Heart left ventricle (tissue), 16 donors: ENCODE measurements at regions of chr3 and their contacts with region 1.

Region 1: GRCh38 chr3:73080216-73080966 is 18.9 kb downstream of the EBLN2 start:
- DNase-seq: no peak
- ATAC-seq: no peak
- H3K4me3 ChIP-seq: no peak overlapping the region
- H3K27ac ChIP-seq: no peak overlapping the region
- H3K4me1 ChIP-seq: no peaks in the 10 kb centered on the region
- H3K27me3 ChIP-seq: no peaks in the 10 kb centered on the region
- CTCF ChIP-seq: no peak
- POLR2A ChIP-seq: no peak

Region 2: DNA sequence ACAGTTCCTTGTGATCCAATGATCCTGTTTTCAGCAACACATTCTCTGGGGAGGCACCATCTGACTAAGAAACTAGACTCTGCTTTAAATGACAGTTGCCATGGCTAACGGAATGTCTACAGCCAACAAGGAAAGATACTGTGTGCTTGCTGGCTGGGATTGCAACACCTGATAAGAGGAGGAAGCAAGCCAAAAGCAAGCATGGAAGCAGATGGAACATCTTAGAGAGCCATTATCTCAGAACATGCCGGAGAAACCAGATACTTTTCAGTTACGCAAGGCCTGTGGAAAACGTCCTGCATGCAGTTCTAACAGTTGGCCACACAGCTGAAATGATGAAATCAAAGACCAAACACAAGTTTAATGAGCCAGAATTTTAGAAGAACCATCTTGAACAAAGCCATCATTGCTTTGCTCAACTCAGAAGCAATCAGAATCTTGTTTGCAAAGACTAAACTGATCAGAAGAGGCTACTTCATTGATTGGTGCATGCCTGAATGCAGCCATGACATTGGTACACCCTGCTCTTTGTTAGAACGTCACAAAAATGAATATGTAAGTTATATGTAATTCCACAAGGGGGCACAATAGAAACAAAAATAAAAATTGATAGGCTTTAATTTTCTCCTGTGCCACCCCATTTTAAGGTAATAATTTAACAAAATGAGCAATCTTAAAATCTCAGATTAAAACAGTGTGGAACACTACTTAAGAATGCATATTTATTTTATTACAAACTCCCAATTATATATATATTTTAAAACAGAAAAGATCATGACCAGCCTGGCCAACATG is 141.7 kb before region 1 on chr3:
- intact Hi-C with region 1: loop called in 6 of 10 experiments (anchors 2 to 10 kb)
- DNase-seq: peak in 4 of 5 donors; percentile 54 to 79 (median 58)
- ATAC-seq: peak; percentile 85 to 96 (median 92)
- H3K4me3 ChIP-seq: peak overlapping the region in 1 of 12 donors; percentile 15
- H3K27ac ChIP-seq: peak overlapping the region in 11 of 12 donors; percentile 24 to 70 (median 49)
- H3K4me1 ChIP-seq: peaks cover 0 to 28% (median 7%) of the 10 kb centered on the region in 12 donors
- H3K27me3 ChIP-seq: no peaks in the 10 kb centered on the region
- CTCF ChIP-seq: peak in 11 of 12 donors; percentile 47 to 80 (median 62)
- POLR2A ChIP-seq: no peak

Region 3: GRCh38 chr3:73141525-73141924 is 61.1 kb after region 1 on chr3:
- intact Hi-C with region 1: no loop called
- DNase-seq: peak in 2 of 5 donors; percentile 17 to 58
- ATAC-seq: peak in 1 of 4 donors; percentile 38
- H3K4me3 ChIP-seq: no peak overlapping the region
- H3K27ac ChIP-seq: no peak overlapping the region
- H3K4me1 ChIP-seq: peaks cover 0 to 26% (median 10%) of the 10 kb centered on the region in 12 donors
- H3K27me3 ChIP-seq: no peaks in the 10 kb centered on the region
- CTCF ChIP-seq: no peak
- POLR2A ChIP-seq: no peak